RWPE1 (cell line): ENCODE measurements at regions of chr3 and their contacts with region 1.

Region 1: GRCh38 chr3:132535575-132536441 is 61.3 kb upstream of the ACKR4 start:
- DNase-seq: peak; percentile 54
- H3K27ac ChIP-seq: no peak overlapping the region
- CTCF ChIP-seq: peak; percentile 64; the same call in 1 of the 2 replicates

Region 2: GRCh38 chr3:132629928-132630327 is 94.1 kb after region 1 on chr3:
- CTCF ChIA-PET with region 1: no interaction called
- POLR2A ChIA-PET with region 1: no interaction called
- DNase-seq: peak; percentile 61
- H3K27ac ChIP-seq: no peak overlapping the region
- CTCF ChIP-seq: no peak

Region 3: DNA sequence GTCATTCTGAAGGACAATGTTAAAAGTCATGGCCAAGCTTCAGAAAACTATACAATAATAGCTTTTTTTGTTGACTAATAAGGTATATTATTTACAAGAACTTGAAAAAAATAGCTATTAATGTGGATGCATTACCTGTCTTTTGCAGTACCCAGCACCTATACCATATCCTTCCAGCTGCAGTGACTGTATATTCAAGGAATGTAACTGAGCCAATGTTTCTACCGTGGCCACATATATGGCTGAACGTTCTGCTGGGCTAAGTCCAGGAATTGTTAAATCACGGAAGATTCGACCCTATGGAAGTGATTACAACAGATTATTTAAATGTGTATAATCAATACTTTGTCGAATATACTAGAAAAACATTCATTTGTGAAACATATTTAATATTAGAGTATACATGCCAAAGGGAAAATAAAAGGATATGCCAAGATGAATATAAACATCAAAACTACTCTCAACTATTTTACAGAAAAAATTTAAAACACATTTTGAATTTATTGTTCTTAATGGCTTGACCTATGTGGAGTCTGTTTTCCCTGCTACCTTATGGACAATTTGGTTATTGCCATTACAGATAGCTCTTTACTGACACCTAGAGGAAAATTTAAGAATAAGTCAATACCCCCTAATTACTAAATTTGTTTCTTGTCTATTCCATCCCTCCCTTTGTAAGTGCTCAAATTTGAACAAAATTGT is 106.2 kb after region 1 on chr3:
- CTCF ChIA-PET with region 1: interaction called, 28 read pairs
- POLR2A ChIA-PET with region 1: interaction called, 6 read pairs
- DNase-seq: peak; percentile 69
- H3K27ac ChIP-seq: no peak overlapping the region
- CTCF ChIP-seq: peak; percentile 82

Region 4: GRCh38 chr3:133106169-133106568 is 570.4 kb after region 1 on chr3:
- CTCF ChIA-PET with region 1: no interaction called
- POLR2A ChIA-PET with region 1: no interaction called
- DNase-seq: no peak
- H3K27ac ChIP-seq: no peak overlapping the region
- CTCF ChIP-seq: no peak